ENCODE measurements at regions of chr15 and their contacts with region 1.

Region 1: DNA sequence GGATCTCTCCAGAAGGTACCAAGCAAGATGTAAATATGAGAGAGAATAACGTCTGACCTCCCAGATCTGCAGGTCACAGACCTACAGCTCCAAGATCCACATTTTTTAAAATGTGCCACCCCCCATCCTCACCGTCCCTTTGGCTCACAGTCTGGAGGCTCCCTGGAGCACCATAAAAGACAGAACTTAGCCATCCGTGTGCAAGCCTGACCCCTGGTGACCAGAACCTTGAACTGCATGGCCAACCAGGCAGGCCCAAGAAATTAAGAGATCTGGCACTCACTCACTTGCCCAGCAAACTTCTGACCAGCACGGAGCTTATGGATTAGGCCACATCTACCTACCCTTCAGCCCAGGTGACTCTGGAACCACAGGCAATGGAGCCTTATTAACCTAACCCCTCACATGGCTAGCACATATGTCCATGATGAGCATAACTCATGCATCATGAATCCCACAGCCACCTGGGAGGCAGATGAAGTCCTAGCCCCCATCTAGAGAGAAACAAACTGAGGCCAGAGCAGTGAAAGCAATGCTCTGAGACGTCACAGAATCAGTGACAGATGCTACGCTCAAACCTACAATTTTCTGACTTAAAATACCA is 275.3 kb downstream of the UACA start:
- DNase-seq: peak; percentile 61 to 74 (median 62)
- H3K4me3 ChIP-seq: no peak overlapping the region
- H3K4me3 Mint-ChIP-seq: peak overlapping the region in 2 of 8 donors; percentile 2 to 15
- H3K27ac ChIP-seq: no peak overlapping the region
- H3K27ac Mint-ChIP-seq: peak overlapping the region in 1 of 7 donors; percentile 3
- H3K4me1 ChIP-seq: peaks cover 65% of the 10 kb centered on the region
- H3K4me1 Mint-ChIP-seq: peaks cover 41 to 85% (median 50%) of the 10 kb centered on the region in 4 donors
- H3K27me3 ChIP-seq: no peaks in the 10 kb centered on the region
- H3K27me3 Mint-ChIP-seq: peaks cover 2 to 10% of the 10 kb centered on the region in 2 donors

Region 2: DNA sequence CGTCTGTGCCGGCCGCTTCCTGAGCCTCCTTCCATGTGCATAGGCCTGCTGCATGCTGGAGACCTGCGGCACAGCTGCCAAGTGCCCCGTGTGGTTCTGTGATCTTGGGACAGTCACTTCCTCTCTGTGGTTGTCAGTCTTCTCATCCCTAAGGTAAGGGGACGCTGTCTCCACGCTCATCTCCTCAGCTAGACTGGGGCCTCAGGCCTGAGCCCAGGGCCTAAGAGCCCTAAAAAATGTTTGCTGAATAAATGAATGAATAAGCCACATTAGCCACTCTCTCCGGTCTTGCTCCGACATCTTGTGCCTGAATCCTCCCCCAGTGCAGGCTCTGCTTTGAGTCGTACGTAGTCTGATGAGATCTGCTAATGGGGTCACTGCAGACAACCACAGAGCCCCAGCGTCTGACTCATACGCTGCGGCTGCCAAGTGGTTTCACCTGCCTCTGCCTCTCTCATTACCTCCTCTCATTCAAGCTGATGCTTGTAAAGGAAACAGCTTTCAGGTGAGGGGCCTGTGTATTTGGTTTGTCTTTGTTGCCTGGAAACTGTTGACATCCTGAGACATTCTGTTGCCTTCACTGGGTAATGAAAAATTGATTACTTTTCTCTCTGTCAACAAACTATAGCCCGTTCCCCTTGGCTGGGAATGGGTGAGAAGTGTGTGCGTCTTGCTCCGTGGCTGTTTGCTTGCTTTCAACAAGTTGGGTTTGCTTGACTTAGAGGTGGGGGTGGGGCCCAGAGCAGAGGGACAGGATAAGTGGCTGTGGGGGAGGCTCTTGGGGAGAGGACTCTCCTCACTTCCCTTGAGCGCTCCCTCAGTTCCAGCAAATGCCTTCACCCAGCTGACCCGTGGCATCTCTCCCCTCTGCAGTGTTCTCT is 1019.6 kb before region 1 on chr15:
- CTCF ChIA-PET with region 1: interaction called, 21 read pairs
- POLR2A ChIA-PET with region 1: interaction called, 26 read pairs
- intact Hi-C with region 1: loop called (anchors 2 kb)
- DNase-seq: peak; percentile 90 to 98 (median 94)
- H3K4me3 ChIP-seq: peak overlapping the region in 1 of 2 donors; percentile 34
- H3K4me3 Mint-ChIP-seq: peak overlapping the region; percentile 50 to 87 (median 78)
- H3K27ac ChIP-seq: peak overlapping the region; percentile 90
- H3K27ac Mint-ChIP-seq: peak overlapping the region; percentile 97 to 100 (median 100)
- H3K4me1 ChIP-seq: peaks cover 41% of the 10 kb centered on the region
- H3K4me1 Mint-ChIP-seq: peaks cover 22 to 50% (median 29%) of the 10 kb centered on the region in 4 donors
- H3K27me3 ChIP-seq: no peaks in the 10 kb centered on the region
- H3K27me3 Mint-ChIP-seq: no peaks in the 10 kb centered on the region

Region 3: DNA sequence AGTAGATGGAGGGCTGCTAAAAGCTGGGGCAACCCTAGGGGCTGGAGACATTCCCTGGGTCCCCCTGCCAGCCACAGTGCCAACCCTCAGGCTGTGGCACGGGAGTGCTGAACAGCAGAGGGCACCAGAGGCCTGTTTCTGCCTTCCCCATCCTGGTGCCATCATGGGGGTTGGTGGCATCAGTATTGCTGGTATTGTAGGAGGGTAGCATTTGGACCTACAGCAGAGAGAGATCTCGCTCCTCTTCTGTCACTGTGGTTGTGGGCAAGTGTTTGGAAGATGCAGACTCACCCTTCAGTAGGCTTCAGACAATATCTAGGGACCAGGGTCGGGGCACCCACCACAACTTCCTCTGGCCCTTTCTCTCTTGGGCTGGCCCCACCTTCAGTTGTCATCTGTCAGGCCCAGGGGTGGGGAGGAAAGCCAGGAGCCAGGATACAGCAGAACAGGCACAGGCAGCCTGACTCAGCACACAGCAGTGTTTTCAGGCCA is 912.0 kb before region 1 on chr15:
- CTCF ChIA-PET with region 1: interaction called, 21 read pairs
- POLR2A ChIA-PET with region 1: no interaction called
- intact Hi-C with region 1: loop called (anchors 1 kb)
- DNase-seq: peak; percentile 59 to 64 (median 61)
- H3K4me3 ChIP-seq: no peak overlapping the region
- H3K4me3 Mint-ChIP-seq: peak overlapping the region in 1 of 8 donors; percentile 37
- H3K27ac ChIP-seq: no peak overlapping the region
- H3K27ac Mint-ChIP-seq: peak overlapping the region in 2 of 7 donors; percentile 25 to 38
- H3K4me1 ChIP-seq: peaks cover 35% of the 10 kb centered on the region
- H3K4me1 Mint-ChIP-seq: peaks cover 18 to 41% (median 33%) of the 10 kb centered on the region in 4 donors
- H3K27me3 ChIP-seq: no peaks in the 10 kb centered on the region
- H3K27me3 Mint-ChIP-seq: peaks cover 0 to 1% of the 10 kb centered on the region in 2 donors

Region 4: GRCh38 chr15:69760890-69761568 is 727.1 kb before region 1 on chr15:
- CTCF ChIA-PET with region 1: interaction called, 6 read pairs
- POLR2A ChIA-PET with region 1: interaction called, 8 read pairs
- intact Hi-C with region 1: loop called (anchors 1 kb)
- DNase-seq: peak; percentile 83 to 94 (median 86)
- H3K4me3 ChIP-seq: no peak overlapping the region
- H3K4me3 Mint-ChIP-seq: peak overlapping the region; percentile 37 to 72 (median 60)
- H3K27ac ChIP-seq: no peak overlapping the region
- H3K27ac Mint-ChIP-seq: peak overlapping the region; percentile 35 to 97 (median 90)
- H3K4me1 ChIP-seq: peaks cover 69% of the 10 kb centered on the region
- H3K4me1 Mint-ChIP-seq: peaks cover 56 to 69% (median 65%) of the 10 kb centered on the region in 4 donors
- H3K27me3 ChIP-seq: no peaks in the 10 kb centered on the region
- H3K27me3 Mint-ChIP-seq: peaks cover 0 to 2% of the 10 kb centered on the region in 2 donors

Region 5: DNA sequence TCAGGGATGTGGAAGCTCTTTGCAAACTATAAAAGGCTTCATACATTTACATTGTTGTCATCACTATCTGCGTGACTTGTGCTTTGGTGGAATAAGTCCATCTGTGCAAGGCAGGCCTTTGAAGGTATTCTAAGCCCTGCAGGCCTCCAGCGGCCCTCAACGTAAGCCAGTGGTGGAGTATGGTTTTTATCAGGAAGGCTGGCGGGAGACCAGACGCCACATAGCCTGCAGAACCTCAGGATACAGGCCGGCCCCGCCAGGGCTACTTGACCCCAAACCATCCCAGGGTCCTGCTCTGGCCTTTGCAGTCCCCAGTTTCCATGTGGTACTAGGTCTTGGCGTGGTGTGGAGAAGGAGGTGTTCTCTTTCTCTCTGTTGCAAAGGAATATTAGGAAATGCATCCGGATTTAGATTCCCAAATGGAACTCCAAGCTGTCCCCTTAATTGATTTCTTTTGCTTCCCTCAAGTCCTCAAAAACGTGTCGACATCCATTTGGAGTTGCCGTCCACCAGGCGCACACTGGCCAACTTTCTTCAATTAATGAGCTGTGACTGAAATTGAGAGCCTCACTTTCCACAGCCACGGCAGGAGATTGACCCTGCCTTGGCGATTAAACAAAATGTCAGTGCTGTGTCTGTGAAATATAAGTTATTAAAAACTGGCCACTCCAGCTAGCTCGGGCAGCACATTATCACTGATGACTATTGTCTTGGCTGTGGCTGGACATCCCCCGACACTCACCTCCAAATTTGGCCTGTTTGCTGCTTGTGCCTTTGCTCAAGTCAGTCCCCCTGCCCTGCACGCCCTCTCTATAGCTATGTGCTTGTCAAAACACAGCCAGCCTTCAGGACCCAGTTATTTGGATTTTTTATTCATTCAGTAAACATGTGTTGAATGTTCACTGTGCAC is 150.6 kb before region 1 on chr15:
- CTCF ChIA-PET with region 1: no interaction called
- POLR2A ChIA-PET with region 1: no interaction called
- intact Hi-C with region 1: no loop called
- DNase-seq: no peak
- H3K4me3 ChIP-seq: no peak overlapping the region
- H3K4me3 Mint-ChIP-seq: no peak overlapping the region
- H3K27ac ChIP-seq: no peak overlapping the region
- H3K27ac Mint-ChIP-seq: no peak overlapping the region
- H3K4me1 ChIP-seq: no peaks in the 10 kb centered on the region
- H3K4me1 Mint-ChIP-seq: no peaks in the 10 kb centered on the region
- H3K27me3 ChIP-seq: no peaks in the 10 kb centered on the region
- H3K27me3 Mint-ChIP-seq: peaks cover 8% of the 10 kb centered on the region in 2 donors

Region 6: GRCh38 chr15:70474471-70475396 is 13.4 kb before region 1 on chr15:
- CTCF ChIA-PET with region 1: interaction called, 109 read pairs
- POLR2A ChIA-PET with region 1: interaction called, 14 read pairs
- intact Hi-C with region 1: no loop called
- DNase-seq: peak in 4 of 5 donors; percentile 22 to 66 (median 30)
- H3K4me3 ChIP-seq: peak overlapping the region in 1 of 2 donors; percentile 29
- H3K4me3 Mint-ChIP-seq: peak overlapping the region; percentile 52 to 79 (median 68)
- H3K27ac ChIP-seq: no peak overlapping the region
- H3K27ac Mint-ChIP-seq: peak overlapping the region in 3 of 7 donors; percentile 46 to 57 (median 52)
- H3K4me1 ChIP-seq: peaks cover 34% of the 10 kb centered on the region
- H3K4me1 Mint-ChIP-seq: peaks cover 17 to 48% (median 33%) of the 10 kb centered on the region in 4 donors
- H3K27me3 ChIP-seq: no peaks in the 10 kb centered on the region
- H3K27me3 Mint-ChIP-seq: peaks cover 3 to 4% of the 10 kb centered on the region in 2 donors

Region 7: DNA sequence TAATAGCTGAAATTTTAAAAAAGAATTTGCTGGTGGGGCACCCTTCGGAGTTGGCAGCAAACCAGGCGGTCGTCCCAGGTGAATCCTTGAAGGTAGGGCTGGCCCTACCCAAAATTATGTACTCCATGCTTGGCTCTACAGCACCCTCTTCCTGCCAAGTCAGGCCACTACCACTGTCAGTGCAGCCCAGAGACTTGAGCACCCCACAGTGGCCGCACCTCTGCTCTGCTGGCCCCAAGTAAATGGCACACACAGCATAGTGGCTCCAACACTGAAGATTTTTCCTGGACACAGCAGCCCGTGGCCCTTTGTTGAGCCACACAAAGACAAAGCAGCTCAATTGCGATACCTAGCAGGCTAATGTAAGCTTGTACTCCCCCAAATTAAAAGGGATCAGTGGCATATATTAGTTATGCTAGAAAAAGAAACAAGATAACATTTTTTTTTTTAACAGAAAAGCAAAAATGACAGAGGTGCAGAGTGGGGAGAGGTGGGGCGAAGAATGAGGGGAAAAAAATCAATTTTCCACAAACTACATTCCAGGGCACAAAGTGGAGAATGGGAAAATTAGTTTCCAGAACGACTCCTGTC is 24.8 kb after region 1 on chr15:
- CTCF ChIA-PET with region 1: interaction called, 33 read pairs
- POLR2A ChIA-PET with region 1: no interaction called
- intact Hi-C with region 1: loop called (anchors 2 kb)
- DNase-seq: peak; percentile 55 to 67 (median 59)
- H3K4me3 ChIP-seq: no peak overlapping the region
- H3K4me3 Mint-ChIP-seq: no peak overlapping the region
- H3K27ac ChIP-seq: no peak overlapping the region
- H3K27ac Mint-ChIP-seq: peak overlapping the region in 1 of 7 donors; percentile 43
- H3K4me1 ChIP-seq: peaks cover 20% of the 10 kb centered on the region
- H3K4me1 Mint-ChIP-seq: peaks cover 9 to 28% (median 18%) of the 10 kb centered on the region in 4 donors
- H3K27me3 ChIP-seq: no peaks in the 10 kb centered on the region
- H3K27me3 Mint-ChIP-seq: no peaks in the 10 kb centered on the region

Region 8: GRCh38 chr15:70535071-70535954 is 47.2 kb after region 1 on chr15:
- CTCF ChIA-PET with region 1: interaction called, 13 read pairs
- POLR2A ChIA-PET with region 1: interaction called, 24 read pairs
- intact Hi-C with region 1: loop called (anchors 1 kb)
- DNase-seq: peak; percentile 66 to 77 (median 73)
- H3K4me3 ChIP-seq: peak overlapping the region; percentile 19 to 53
- H3K4me3 Mint-ChIP-seq: peak overlapping the region; percentile 84 to 95 (median 90)
- H3K27ac ChIP-seq: peak overlapping the region; percentile 23
- H3K27ac Mint-ChIP-seq: peak overlapping the region; percentile 86 to 95 (median 89)
- H3K4me1 ChIP-seq: peaks cover 65% of the 10 kb centered on the region
- H3K4me1 Mint-ChIP-seq: peaks cover 44 to 78% (median 61%) of the 10 kb centered on the region in 4 donors
- H3K27me3 ChIP-seq: no peaks in the 10 kb centered on the region
- H3K27me3 Mint-ChIP-seq: no peaks in the 10 kb centered on the region

Measured in CD4-positive, alpha-beta memory T cell (primary cell).